Activated CD4-positive, alpha-beta T cell treated with anti-CD3 and anti-CD28 coated beads for 36 hours (primary cell): ENCODE measurements at regions of chr17 and their contacts with region 1.

Region 1: DNA sequence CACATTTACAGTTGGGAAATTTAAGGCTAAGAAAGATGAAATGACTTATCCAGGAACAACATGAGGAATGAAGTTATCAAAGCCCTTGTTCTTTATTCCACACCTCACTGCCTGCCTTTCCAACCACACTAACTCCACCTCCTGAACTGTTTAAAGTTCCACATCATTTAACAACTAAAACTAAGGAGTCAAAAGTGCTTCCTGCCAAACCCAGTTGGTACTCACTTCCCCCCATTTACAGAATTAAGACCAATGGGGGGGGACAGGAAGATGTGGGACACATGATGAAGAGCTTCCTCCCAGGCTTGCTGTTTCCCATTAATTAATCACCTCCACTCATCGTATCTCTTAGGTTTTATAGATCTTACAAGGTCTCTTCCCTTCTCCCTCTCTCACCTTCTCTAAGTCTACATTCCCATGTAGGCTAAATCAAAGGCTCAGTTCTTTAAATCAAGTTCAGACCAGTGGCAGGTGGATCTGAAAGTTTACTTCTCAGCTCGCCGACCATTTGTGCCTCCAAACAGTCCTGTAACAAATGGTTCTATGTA is 19.2 kb upstream of the TMEM101 start:
- DNase-seq: no peak
- ATAC-seq: no peak
- H3K4me3 Mint-ChIP-seq: no peak overlapping the region
- H3K27ac Mint-ChIP-seq: no peak overlapping the region
- H3K4me1 Mint-ChIP-seq: peaks cover 5% of the 10 kb centered on the region
- H3K27me3 Mint-ChIP-seq: no peaks in the 10 kb centered on the region

Region 2: DNA sequence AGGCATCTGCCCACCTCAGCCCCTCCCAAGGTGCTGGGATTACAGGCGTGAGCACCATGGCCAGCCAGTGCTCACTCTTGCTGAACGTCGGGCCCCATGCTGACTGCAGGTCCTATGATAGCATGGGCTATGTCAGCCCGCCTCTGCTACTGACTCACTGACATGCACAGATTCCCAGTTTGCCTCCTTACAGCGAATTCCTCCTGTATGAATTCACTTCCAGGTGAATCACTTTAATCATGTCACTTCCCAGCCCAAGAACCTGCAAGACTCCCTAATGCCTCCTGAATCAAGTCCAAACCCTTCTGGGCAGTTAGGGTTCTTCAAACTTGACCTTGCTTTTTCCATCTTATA is 201.6 kb after region 1 on chr17:
- CTCF ChIA-PET with region 1: no interaction called
- POLR2A ChIA-PET with region 1: interaction called, 10 read pairs
- intact Hi-C with region 1: no loop called
- DNase-seq: no peak
- ATAC-seq: no peak
- H3K4me3 Mint-ChIP-seq: no peak overlapping the region
- H3K27ac Mint-ChIP-seq: no peak overlapping the region
- H3K4me1 Mint-ChIP-seq: peaks cover 6% of the 10 kb centered on the region
- H3K27me3 Mint-ChIP-seq: no peaks in the 10 kb centered on the region